PC-3 (cell line): ENCODE measurements at regions of chr6 and their contacts with region 1.

Region 1: GRCh38 chr6:28496099-28496779 is 19.4 kb downstream of the GPX6 start:
- DNase-seq: peak; percentile 26
- ATAC-seq: peak; percentile 35; the same call in 1 of the 2 replicates
- H3K4me3 ChIP-seq: no peak overlapping the region
- H3K27ac ChIP-seq: no peak overlapping the region
- H3K4me1 ChIP-seq: peaks cover 13% of the 10 kb centered on the region
- H3K27me3 ChIP-seq: peaks cover 21% of the 10 kb centered on the region; the same call in 1 of the 2 replicates
- CTCF ChIP-seq: peak; percentile 53

Region 2: DNA sequence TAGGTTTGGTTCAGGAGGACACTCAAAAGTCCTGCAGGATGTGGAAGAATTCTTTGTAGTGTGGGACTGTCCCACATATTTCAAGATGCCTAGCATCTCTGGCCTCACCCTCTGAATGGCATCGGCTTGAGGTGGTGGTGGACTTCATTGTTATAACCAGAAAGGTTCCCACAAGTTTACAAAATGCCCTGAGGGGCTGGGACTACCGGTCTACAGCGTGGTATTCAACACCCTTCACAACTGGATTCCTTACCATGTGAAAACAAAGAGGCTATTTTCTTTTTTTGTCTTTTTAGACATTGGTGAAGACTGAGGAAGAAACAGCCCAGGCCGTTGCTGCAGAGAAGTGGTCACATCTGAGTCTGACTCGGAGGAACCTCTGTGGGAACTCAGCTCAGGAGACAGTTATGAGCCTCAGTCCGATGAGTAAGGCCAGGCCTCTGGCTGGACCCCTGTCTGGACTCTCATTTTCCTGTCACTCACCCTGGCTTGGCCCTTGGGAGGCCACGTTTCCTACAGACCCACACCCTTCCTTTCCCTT is 199.6 kb before region 1 on chr6:
- CTCF ChIA-PET with region 1: no interaction called
- POLR2A ChIA-PET with region 1: no interaction called
- intact Hi-C with region 1: no loop called
- DNase-seq: no peak
- ATAC-seq: no peak
- H3K4me3 ChIP-seq: no peak overlapping the region
- H3K27ac ChIP-seq: no peak overlapping the region
- H3K4me1 ChIP-seq: no peaks in the 10 kb centered on the region
- H3K27me3 ChIP-seq: no peaks in the 10 kb centered on the region
- CTCF ChIP-seq: no peak

Region 3: DNA sequence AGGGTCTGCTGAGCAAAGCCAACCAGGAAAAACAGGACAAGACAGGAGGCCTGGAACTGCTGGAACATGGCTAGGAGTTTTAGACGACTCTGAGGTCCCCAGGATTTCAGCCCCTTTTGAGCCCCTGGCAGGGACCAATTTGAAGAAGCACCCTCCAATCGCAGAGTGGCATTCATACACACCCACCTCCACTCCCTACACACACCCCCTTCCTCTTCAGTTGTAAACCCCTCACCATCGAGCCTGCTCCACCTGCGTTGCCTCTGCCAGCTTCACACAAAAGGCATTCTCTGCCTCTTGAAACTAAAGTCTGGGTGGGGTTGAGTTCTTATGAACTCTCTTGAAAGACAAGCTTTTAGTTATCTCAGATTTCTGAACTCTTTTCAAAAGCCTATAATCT is 19.4 kb after region 1 on chr6 and contains the start of gene GPX6:
- CTCF ChIA-PET with region 1: no interaction called
- POLR2A ChIA-PET with region 1: no interaction called
- intact Hi-C with region 1: loop called (anchors 1 kb)
- DNase-seq: no peak
- ATAC-seq: no peak
- H3K4me3 ChIP-seq: no peak within 1 kb of the TSS
- H3K27ac ChIP-seq: no peak within 1 kb of the TSS
- H3K4me1 ChIP-seq: no peaks in the 10 kb centered on the region
- H3K27me3 ChIP-seq: peaks cover 76% of the 10 kb centered on the region
- CTCF ChIP-seq: no peak
- total RNA-seq, gene GPX6: not detected in 2 replicates